Esophagus squamous epithelium (tissue), 5 donors: ENCODE measurements at regions of chr3 and their contacts with region 1.

Region 1: DNA sequence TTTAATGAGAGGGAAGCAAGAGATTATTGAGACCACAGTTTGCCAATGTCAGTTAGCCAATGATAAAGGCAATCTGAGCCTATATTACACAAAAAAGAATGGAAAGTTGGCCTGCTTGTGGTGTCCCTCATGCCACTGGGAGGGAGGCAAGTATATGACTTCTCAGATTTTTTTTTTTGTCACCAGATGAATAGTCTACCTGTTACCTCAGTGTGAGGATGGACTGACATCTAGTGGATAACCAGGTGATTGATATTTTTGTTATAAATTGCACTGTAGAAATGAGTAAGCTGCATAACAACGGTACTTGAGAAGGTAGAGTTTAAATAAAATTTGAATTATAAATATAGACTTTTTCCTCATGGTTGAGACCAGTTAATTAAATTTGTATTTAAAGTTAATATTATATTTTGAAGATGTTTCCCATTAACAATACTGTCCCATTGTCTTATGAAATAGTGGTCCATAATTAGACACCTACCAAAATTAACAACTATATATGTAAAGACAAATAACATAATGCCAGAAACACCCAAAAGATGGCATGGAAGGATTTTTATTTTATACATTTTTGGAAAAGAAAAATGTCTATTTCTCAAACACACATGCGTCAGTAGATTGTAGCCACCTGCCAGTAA is 237.8 kb upstream of the GADL1 start:
- DNase-seq: no peak
- H3K4me3 ChIP-seq: no peak overlapping the region
- H3K27ac ChIP-seq: no peak overlapping the region
- H3K4me1 ChIP-seq: no peaks in the 10 kb centered on the region
- H3K27me3 ChIP-seq: no peaks in the 10 kb centered on the region
- CTCF ChIP-seq: peak in 5 of 6 experiments; percentile 44 to 77 (median 56)
- POLR2A ChIP-seq: no peak

Region 2: GRCh38 chr3:30199096-30199759 is 933.0 kb before region 1 on chr3:
- intact Hi-C with region 1: no loop called
- DNase-seq: no peak
- H3K4me3 ChIP-seq: no peak overlapping the region
- H3K27ac ChIP-seq: no peak overlapping the region
- H3K4me1 ChIP-seq: peaks cover 0 to 5% (median 0%) of the 10 kb centered on the region in 3 donors
- H3K27me3 ChIP-seq: no peaks in the 10 kb centered on the region
- CTCF ChIP-seq: peak; percentile 47 to 85 (median 76)
- POLR2A ChIP-seq: no peak

Region 3: GRCh38 chr3:30779686-30780287 is 352.5 kb before region 1 on chr3:
- intact Hi-C with region 1: loop called (anchors 5 kb)
- DNase-seq: no peak
- H3K4me3 ChIP-seq: no peak overlapping the region
- H3K27ac ChIP-seq: no peak overlapping the region
- H3K4me1 ChIP-seq: peaks cover 0 to 16% (median 0%) of the 10 kb centered on the region in 3 donors
- H3K27me3 ChIP-seq: no peaks in the 10 kb centered on the region
- CTCF ChIP-seq: peak in 3 of 6 experiments; percentile 9 to 60 (median 20)
- POLR2A ChIP-seq: no peak

Region 4: DNA sequence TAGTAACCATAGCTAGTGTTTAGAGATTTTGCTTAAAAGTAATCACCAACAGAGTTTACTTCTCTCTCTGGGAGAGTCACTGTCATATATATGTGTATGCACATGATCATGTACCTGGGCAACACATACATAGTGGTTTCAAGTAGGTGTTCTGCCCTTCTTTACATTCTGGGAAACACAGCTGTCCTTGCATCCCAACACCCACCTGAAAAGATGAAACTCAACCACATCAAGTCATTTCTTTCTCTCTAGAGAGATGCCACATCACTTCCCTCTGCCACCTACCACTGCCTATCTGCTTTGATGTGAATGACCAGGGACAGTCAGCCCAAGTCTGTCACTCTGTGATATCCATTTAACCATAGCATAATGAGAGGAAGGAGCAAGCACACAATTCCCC is 82.0 kb before region 1 on chr3:
- intact Hi-C with region 1: no loop called
- DNase-seq: no peak
- H3K4me3 ChIP-seq: no peak overlapping the region
- H3K27ac ChIP-seq: no peak overlapping the region
- H3K4me1 ChIP-seq: no peaks in the 10 kb centered on the region
- H3K27me3 ChIP-seq: no peaks in the 10 kb centered on the region
- CTCF ChIP-seq: no peak
- POLR2A ChIP-seq: no peak